Right cardiac atrium (tissue), 5 donors: ENCODE measurements at regions of chr6 and their contacts with region 1.

Region 1: GRCh38 chr6:113732384-113732966 is 124.7 kb upstream of the MARCKS start:
- DNase-seq: peak; percentile 40 to 67 (median 62)
- ATAC-seq: peak; percentile 94 to 97
- H3K4me3 ChIP-seq: no peak overlapping the region
- H3K27ac ChIP-seq: no peak overlapping the region
- H3K4me1 ChIP-seq: peaks cover 2% of the 10 kb centered on the region
- H3K27me3 ChIP-seq: no peaks in the 10 kb centered on the region

Region 2: GRCh38 chr6:113684382-113684901 is 48.0 kb before region 1 on chr6:
- intact Hi-C with region 1: loop called in 1 of 4 experiments (anchors 5 kb)
- DNase-seq: no peak
- ATAC-seq: no peak
- H3K4me3 ChIP-seq: no peak overlapping the region
- H3K27ac ChIP-seq: no peak overlapping the region
- H3K4me1 ChIP-seq: no peaks in the 10 kb centered on the region
- H3K27me3 ChIP-seq: no peaks in the 10 kb centered on the region

Region 3: GRCh38 chr6:114020196-114020595 is 287.7 kb after region 1 on chr6:
- intact Hi-C with region 1: no loop called
- DNase-seq: no peak
- ATAC-seq: no peak
- H3K4me3 ChIP-seq: no peak overlapping the region
- H3K27ac ChIP-seq: no peak overlapping the region
- H3K4me1 ChIP-seq: no peaks in the 10 kb centered on the region
- H3K27me3 ChIP-seq: no peaks in the 10 kb centered on the region